Natural killer cell (primary cell): ENCODE measurements at regions of chr12 and their contacts with region 1.

Region 1: GRCh38 chr12:50504798-50505385 is at the start of gene DIP2B:
- DNase-seq: peak; percentile 94 to 96
- ATAC-seq: peak; percentile 93 to 98 (median 93)
- H3K4me3 ChIP-seq: peak within 1 kb of the TSS; percentile 62
- H3K4me3 Mint-ChIP-seq: peak within 1 kb of the TSS; percentile 93
- H3K27ac ChIP-seq: peak within 1 kb of the TSS; percentile 70
- H3K27ac Mint-ChIP-seq: peak within 1 kb of the TSS; percentile 80 to 92
- H3K4me1 ChIP-seq: peaks cover 20% of the 10 kb centered on the region
- H3K4me1 Mint-ChIP-seq: peaks cover 46 to 50% of the 10 kb centered on the region in 2 donors
- H3K27me3 ChIP-seq: no peaks in the 10 kb centered on the region
- H3K27me3 Mint-ChIP-seq: no peaks in the 10 kb centered on the region
- CTCF ChIP-seq: peak; percentile 88
- total RNA-seq, gene DIP2B: 17.2 to 23.2 (median 22.2) TPM

Region 2: DNA sequence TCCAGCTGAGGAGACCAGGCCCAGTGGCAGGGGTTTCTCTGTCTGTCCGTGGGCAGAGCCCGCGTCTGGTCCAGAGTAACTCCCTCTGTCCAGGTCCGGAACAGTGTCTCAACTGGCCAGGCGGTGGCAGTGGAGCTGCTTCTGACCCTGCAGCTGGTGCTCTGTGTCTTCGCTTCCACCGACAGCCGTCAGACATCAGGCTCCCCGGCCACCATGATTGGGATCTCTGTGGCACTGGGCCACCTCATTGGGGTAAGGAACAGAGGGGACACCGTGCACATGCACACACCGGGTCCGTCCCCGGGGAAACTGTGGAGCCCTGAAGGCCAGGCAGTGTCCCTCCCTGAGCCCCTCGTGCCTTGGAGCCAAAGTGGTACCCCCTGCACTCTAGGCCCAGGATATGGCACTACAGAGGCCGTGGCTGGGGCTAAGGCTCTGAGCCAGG is 530.6 kb before region 1 on chr12:
- intact Hi-C with region 1: no loop called
- DNase-seq: no peak
- ATAC-seq: no peak
- H3K4me3 ChIP-seq: no peak overlapping the region
- H3K4me3 Mint-ChIP-seq: no peak overlapping the region
- H3K27ac ChIP-seq: no peak overlapping the region
- H3K27ac Mint-ChIP-seq: no peak overlapping the region
- H3K4me1 ChIP-seq: no peaks in the 10 kb centered on the region
- H3K4me1 Mint-ChIP-seq: no peaks in the 10 kb centered on the region
- H3K27me3 ChIP-seq: no peaks in the 10 kb centered on the region
- H3K27me3 Mint-ChIP-seq: no peaks in the 10 kb centered on the region
- CTCF ChIP-seq: no peak

Region 3: GRCh38 chr12:50482566-50482965 is 22.3 kb before region 1 on chr12:
- intact Hi-C with region 1: no loop called
- DNase-seq: no peak
- ATAC-seq: no peak
- H3K4me3 ChIP-seq: no peak overlapping the region
- H3K4me3 Mint-ChIP-seq: no peak overlapping the region
- H3K27ac ChIP-seq: no peak overlapping the region
- H3K27ac Mint-ChIP-seq: no peak overlapping the region
- H3K4me1 ChIP-seq: no peaks in the 10 kb centered on the region
- H3K4me1 Mint-ChIP-seq: no peaks in the 10 kb centered on the region
- H3K27me3 ChIP-seq: no peaks in the 10 kb centered on the region
- H3K27me3 Mint-ChIP-seq: no peaks in the 10 kb centered on the region
- CTCF ChIP-seq: no peak

Region 4: DNA sequence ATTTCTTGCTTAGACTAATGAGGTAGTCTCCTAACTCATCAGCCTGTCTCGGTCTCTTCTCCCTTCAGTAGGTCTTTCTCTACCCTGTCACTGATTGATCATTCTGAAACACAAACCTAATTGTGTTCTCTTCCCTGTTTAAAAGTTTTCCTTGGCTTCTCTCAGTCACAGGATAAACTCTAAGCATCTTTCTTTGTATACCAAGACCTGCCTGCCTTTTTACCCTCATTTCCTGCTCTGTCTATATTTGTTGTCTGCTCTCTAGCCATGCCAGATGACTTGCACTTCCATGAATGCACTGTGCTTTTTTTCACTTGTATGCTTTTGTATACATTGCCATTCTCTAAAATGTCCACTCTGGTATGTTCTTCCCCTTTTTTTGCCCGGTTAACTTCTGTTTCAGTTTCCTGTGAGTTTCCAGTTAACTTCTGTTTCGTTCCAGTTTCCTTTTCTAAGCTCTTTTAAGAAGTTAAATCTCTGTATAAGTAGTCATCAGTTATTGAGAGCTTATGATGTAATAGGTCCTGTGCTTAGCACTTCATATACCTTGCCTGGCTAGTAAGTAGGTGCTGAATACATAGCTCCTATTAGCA is 12.7 kb after region 1 on chr12:
- intact Hi-C with region 1: no loop called
- DNase-seq: peak in 1 of 2 donors; percentile 45
- ATAC-seq: peak; percentile 47 to 72 (median 49)
- H3K4me3 ChIP-seq: no peak overlapping the region
- H3K4me3 Mint-ChIP-seq: no peak overlapping the region
- H3K27ac ChIP-seq: peak overlapping the region; percentile 67
- H3K27ac Mint-ChIP-seq: no peak overlapping the region
- H3K4me1 ChIP-seq: peaks cover 39% of the 10 kb centered on the region
- H3K4me1 Mint-ChIP-seq: peaks cover 44 to 45% of the 10 kb centered on the region in 2 donors
- H3K27me3 ChIP-seq: no peaks in the 10 kb centered on the region
- H3K27me3 Mint-ChIP-seq: no peaks in the 10 kb centered on the region
- CTCF ChIP-seq: no peak

Region 5: GRCh38 chr12:50533203-50533584 is 28.3 kb after region 1 on chr12:
- intact Hi-C with region 1: loop called (anchors 2 kb)
- DNase-seq: no peak
- ATAC-seq: peak; percentile 2 to 17 (median 15)
- H3K4me3 ChIP-seq: no peak overlapping the region
- H3K4me3 Mint-ChIP-seq: no peak overlapping the region
- H3K27ac ChIP-seq: peak overlapping the region; percentile 26
- H3K27ac Mint-ChIP-seq: no peak overlapping the region
- H3K4me1 ChIP-seq: peaks cover 40% of the 10 kb centered on the region
- H3K4me1 Mint-ChIP-seq: peaks cover 25 to 29% of the 10 kb centered on the region in 2 donors
- H3K27me3 ChIP-seq: no peaks in the 10 kb centered on the region
- H3K27me3 Mint-ChIP-seq: no peaks in the 10 kb centered on the region
- CTCF ChIP-seq: no peak

Region 6: DNA sequence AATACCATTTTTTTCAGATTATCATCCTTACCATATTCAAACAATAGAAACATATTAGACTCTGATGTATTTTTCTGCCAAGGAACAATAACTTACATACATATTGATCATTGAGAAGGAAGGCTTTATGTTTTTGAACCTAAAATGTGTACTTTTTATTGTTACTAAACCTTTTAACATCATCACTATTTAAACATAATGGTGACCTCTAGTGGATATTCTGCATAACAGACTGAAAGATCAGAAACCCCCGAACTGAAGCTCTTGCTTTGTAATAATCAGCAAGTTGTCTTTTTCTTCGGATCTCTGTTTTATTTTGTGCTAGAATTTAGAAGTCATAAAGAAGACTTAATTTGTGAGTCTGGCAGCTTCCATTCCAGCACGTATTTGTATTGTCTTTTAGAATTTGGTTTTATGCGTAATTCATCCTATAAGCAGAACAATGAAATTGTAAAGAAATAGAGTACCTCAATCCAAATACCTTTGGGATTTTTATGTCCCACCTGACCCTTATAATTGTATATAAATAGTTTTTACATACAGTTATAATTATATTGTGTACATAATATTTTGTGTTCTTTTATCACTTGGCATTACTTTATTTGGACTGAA is 133.1 kb after region 1 on chr12:
- intact Hi-C with region 1: loop called (anchors 1 kb)
- DNase-seq: peak in 1 of 2 donors; percentile 65
- ATAC-seq: peak in 2 of 3 donors; percentile 59 to 67
- H3K4me3 ChIP-seq: no peak overlapping the region
- H3K4me3 Mint-ChIP-seq: no peak overlapping the region
- H3K27ac ChIP-seq: no peak overlapping the region
- H3K27ac Mint-ChIP-seq: peak overlapping the region; percentile 33 to 61
- H3K4me1 ChIP-seq: peaks cover 3% of the 10 kb centered on the region
- H3K4me1 Mint-ChIP-seq: peaks cover 21 to 32% of the 10 kb centered on the region in 2 donors
- H3K27me3 ChIP-seq: no peaks in the 10 kb centered on the region
- H3K27me3 Mint-ChIP-seq: no peaks in the 10 kb centered on the region
- CTCF ChIP-seq: peak; percentile 67

Region 7: DNA sequence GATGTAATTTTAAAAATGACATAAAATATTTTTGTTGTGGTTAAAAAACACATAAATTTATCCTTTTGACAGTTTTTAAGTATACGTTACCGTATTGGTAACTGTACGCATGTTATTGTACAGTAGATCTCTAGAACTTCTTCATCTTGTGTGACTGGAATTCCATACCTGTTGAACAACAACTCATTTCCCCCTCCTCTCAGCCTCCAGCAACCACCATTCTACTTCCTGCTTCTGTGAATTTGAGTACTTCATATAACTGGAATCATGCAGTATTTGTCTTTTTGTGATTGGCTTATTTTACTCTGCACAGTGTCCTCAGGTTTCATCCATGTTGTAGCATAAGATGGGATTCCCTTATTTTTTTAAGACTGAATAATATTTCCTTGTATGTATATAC is 145.4 kb after region 1 on chr12:
- intact Hi-C with region 1: no loop called
- DNase-seq: no peak
- ATAC-seq: no peak
- H3K4me3 ChIP-seq: no peak overlapping the region
- H3K4me3 Mint-ChIP-seq: no peak overlapping the region
- H3K27ac ChIP-seq: no peak overlapping the region
- H3K27ac Mint-ChIP-seq: no peak overlapping the region
- H3K4me1 ChIP-seq: no peaks in the 10 kb centered on the region
- H3K4me1 Mint-ChIP-seq: no peaks in the 10 kb centered on the region
- H3K27me3 ChIP-seq: no peaks in the 10 kb centered on the region
- H3K27me3 Mint-ChIP-seq: no peaks in the 10 kb centered on the region
- CTCF ChIP-seq: no peak

Region 8: GRCh38 chr12:50734409-50735263 is 229.7 kb after region 1 on chr12:
- intact Hi-C with region 1: loop called (anchors 10 kb)
- DNase-seq: peak in 1 of 2 donors; percentile 44
- ATAC-seq: peak in 2 of 3 donors; percentile 48 to 52
- H3K4me3 ChIP-seq: no peak overlapping the region
- H3K4me3 Mint-ChIP-seq: no peak overlapping the region
- H3K27ac ChIP-seq: no peak overlapping the region
- H3K27ac Mint-ChIP-seq: no peak overlapping the region
- H3K4me1 ChIP-seq: no peaks in the 10 kb centered on the region
- H3K4me1 Mint-ChIP-seq: no peaks in the 10 kb centered on the region
- H3K27me3 ChIP-seq: no peaks in the 10 kb centered on the region
- H3K27me3 Mint-ChIP-seq: no peaks in the 10 kb centered on the region
- CTCF ChIP-seq: peak; percentile 39